B cell (primary cell): ENCODE measurements at regions of chr9 and their contacts with region 1.

Region 1: DNA sequence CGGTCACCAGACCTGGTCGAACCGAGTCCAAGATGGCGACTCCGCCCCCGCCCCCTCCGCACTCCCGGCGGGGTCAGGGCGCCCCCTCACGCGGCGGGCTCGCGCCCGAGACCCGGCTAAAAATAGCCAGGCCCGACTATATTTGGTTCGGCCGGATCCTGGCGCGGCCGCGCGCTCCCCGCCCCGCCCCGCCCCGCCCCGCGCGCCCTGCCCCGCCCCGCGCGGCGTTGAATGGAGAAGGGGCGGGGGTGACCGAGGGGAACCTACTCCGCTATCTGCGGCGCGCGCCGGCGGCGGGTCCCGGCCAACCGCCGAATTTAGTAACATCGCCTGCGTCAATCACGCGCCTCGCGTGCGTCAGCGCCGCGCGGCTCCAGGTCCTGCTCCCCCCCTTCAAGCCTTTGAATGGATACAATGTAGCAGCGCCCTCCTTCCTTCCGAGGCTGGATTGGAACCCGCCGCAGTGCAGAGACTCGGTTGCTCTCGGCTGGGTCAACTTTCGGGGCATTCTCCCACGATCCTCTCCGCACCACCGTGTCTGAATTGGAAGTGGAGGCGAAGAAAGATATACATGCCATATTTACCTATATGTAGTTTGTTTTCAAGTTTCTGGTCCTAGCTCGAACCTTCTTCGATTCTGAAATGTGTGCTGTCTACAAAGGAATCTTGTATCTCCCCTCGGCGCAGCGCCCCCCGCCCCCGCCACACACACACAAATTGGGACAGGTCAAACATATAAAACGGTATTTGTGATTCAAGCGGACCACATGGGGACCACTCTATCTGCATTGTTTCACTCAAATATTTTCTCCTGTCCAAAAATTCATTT is 1.6 kb upstream of the NR4A3 start:
- DNase-seq: peak; percentile 98
- ATAC-seq: peak; percentile 54
- H3K4me3 ChIP-seq: peak overlapping the region; percentile 73 to 100 (median 80)
- H3K4me3 Mint-ChIP-seq: peak overlapping the region; percentile 100
- H3K27ac ChIP-seq: peak overlapping the region; percentile 94 to 98
- H3K27ac Mint-ChIP-seq: peak overlapping the region; percentile 98
- H3K4me1 ChIP-seq: peaks cover 41 to 49% of the 10 kb centered on the region in 2 donors
- H3K4me1 Mint-ChIP-seq: peaks cover 47% of the 10 kb centered on the region
- H3K27me3 ChIP-seq: peaks cover 0 to 33% (median 18%) of the 10 kb centered on the region in 4 experiments
- H3K27me3 Mint-ChIP-seq: peaks cover 10% of the 10 kb centered on the region
- CTCF ChIP-seq: no peak

Region 2: DNA sequence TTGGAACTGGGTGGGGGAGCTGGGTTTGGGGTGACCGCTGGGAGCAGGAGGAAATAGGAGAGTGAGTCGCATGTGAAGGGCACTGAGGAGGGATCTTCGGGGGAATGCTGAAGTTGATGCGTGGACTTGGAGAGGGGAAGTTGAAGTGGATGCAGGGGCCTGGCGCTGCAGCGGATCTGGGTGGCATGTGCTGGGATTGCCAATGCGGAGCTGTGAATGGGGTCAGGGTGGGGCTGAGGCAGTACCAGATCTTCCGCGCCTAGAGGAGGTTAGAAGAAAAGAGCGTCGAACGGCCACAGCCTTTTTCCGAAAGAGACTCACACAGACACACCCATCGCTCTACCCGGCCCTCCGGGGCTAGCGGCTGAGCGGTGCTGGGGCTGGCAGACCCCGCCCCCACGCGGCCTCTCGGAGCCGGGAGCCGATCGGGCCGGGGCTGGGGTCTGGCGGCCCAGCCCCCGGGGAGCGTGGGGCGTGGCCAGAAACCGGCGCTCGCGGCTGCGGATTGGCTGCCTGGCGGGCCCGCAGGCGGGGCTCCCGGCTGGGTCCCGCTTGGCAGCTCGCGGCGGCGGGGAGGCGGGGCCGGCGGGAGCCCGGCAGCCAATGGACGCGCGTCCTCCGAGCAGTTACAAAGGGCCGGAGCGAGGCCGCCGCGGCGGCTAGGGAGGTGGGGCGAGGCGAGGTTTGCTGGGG is 715.5 kb before region 1 on chr9 and contains the start of gene TGFBR1:
- CTCF ChIA-PET with region 1: interaction called, 4 read pairs
- POLR2A ChIA-PET with region 1: no interaction called
- intact Hi-C with region 1: loop called (anchors 2 kb)
- DNase-seq: peak; percentile 96
- ATAC-seq: peak; percentile 83
- H3K4me3 ChIP-seq: peak within 1 kb of the TSS; percentile 64 to 87 (median 79)
- H3K4me3 Mint-ChIP-seq: peak within 1 kb of the TSS; percentile 97
- H3K27ac ChIP-seq: peak within 1 kb of the TSS; percentile 16 to 74
- H3K27ac Mint-ChIP-seq: peak within 1 kb of the TSS; percentile 89
- H3K4me1 ChIP-seq: peaks cover 40 to 44% of the 10 kb centered on the region in 2 donors
- H3K4me1 Mint-ChIP-seq: peaks cover 48% of the 10 kb centered on the region
- H3K27me3 ChIP-seq: no peaks in the 10 kb centered on the region
- H3K27me3 Mint-ChIP-seq: no peaks in the 10 kb centered on the region
- CTCF ChIP-seq: no peak
- total RNA-seq, gene TGFBR1: 60.7 TPM in 2 replicates

Region 3: GRCh38 chr9:99231711-99232110 is 588.4 kb before region 1 on chr9:
- CTCF ChIA-PET with region 1: interaction called, 17 read pairs
- POLR2A ChIA-PET with region 1: interaction called, 5 read pairs
- intact Hi-C with region 1: loop called (anchors 1 kb)
- DNase-seq: peak; percentile 52
- ATAC-seq: no peak
- H3K4me3 ChIP-seq: no peak overlapping the region
- H3K4me3 Mint-ChIP-seq: no peak overlapping the region
- H3K27ac ChIP-seq: no peak overlapping the region
- H3K27ac Mint-ChIP-seq: no peak overlapping the region
- H3K4me1 ChIP-seq: peaks cover 21 to 23% of the 10 kb centered on the region in 2 donors
- H3K4me1 Mint-ChIP-seq: peaks cover 29% of the 10 kb centered on the region
- H3K27me3 ChIP-seq: no peaks in the 10 kb centered on the region
- H3K27me3 Mint-ChIP-seq: no peaks in the 10 kb centered on the region
- CTCF ChIP-seq: peak; percentile 75

Region 4: DNA sequence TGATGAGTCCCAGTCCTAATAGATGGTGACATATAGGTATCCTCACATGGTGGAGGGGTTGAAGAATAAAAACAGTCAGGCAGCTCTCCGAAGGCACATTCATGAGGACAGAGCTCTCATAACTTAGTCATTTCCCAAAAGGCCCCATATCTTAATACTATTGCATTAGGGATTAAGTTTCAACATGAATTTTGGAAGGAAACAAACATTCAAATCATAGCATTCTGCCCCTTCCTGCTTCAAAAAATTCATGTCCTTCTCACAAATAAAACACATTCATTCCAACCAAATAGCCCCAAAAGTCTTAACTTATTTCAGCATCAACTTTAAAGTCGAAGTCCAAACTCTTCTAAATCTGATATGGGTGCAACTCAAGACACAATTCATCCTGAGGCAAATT is 275.5 kb before region 1 on chr9:
- CTCF ChIA-PET with region 1: no interaction called
- POLR2A ChIA-PET with region 1: no interaction called
- intact Hi-C with region 1: no loop called
- DNase-seq: no peak
- ATAC-seq: no peak
- H3K4me3 ChIP-seq: no peak overlapping the region
- H3K4me3 Mint-ChIP-seq: no peak overlapping the region
- H3K27ac ChIP-seq: no peak overlapping the region
- H3K27ac Mint-ChIP-seq: no peak overlapping the region
- H3K4me1 ChIP-seq: no peaks in the 10 kb centered on the region
- H3K4me1 Mint-ChIP-seq: no peaks in the 10 kb centered on the region
- H3K27me3 ChIP-seq: no peaks in the 10 kb centered on the region
- H3K27me3 Mint-ChIP-seq: peaks cover 7% of the 10 kb centered on the region
- CTCF ChIP-seq: no peak

Region 5: DNA sequence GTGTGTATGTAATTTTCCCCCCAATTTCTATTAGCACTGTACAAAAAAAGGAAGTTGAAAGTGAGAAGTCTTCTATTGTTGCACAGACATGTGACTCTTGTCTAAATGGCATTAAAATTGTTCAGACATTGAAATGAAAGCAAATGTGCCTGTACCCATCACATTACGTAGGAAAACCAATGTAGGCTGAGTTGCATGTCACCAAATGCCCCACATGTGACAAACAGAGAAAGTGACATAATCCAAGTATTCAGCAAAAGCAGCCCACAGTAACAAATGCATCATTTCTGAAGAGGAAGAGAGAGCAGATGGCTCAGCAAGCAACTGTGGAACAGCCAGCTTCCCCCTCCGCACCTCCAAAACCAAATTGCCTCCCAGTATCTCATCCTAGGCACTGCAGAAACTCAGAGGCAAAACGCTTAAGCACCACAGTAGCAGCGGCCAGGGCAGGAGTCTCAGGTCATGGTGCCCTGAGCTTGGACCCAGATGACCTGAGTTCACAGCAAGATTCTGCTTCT is 159.8 kb before region 1 on chr9:
- CTCF ChIA-PET with region 1: no interaction called
- POLR2A ChIA-PET with region 1: no interaction called
- intact Hi-C with region 1: loop called (anchors 1 kb)
- DNase-seq: peak; percentile 90
- ATAC-seq: peak; percentile 93
- H3K4me3 ChIP-seq: peak overlapping the region in 3 of 5 experiments; percentile 12 to 40 (median 22)
- H3K4me3 Mint-ChIP-seq: peak overlapping the region; percentile 55
- H3K27ac ChIP-seq: peak overlapping the region; percentile 59 to 80
- H3K27ac Mint-ChIP-seq: peak overlapping the region; percentile 92
- H3K4me1 ChIP-seq: peaks cover 14 to 16% of the 10 kb centered on the region in 2 donors
- H3K4me1 Mint-ChIP-seq: peaks cover 22% of the 10 kb centered on the region
- H3K27me3 ChIP-seq: no peaks in the 10 kb centered on the region
- H3K27me3 Mint-ChIP-seq: no peaks in the 10 kb centered on the region
- CTCF ChIP-seq: no peak

Region 6: GRCh38 chr9:99948896-99949295 is 128.8 kb after region 1 on chr9:
- CTCF ChIA-PET with region 1: no interaction called
- POLR2A ChIA-PET with region 1: no interaction called
- intact Hi-C with region 1: no loop called
- DNase-seq: no peak
- ATAC-seq: no peak
- H3K4me3 ChIP-seq: no peak overlapping the region
- H3K4me3 Mint-ChIP-seq: no peak overlapping the region
- H3K27ac ChIP-seq: no peak overlapping the region
- H3K27ac Mint-ChIP-seq: no peak overlapping the region
- H3K4me1 ChIP-seq: no peaks in the 10 kb centered on the region
- H3K4me1 Mint-ChIP-seq: peaks cover 1% of the 10 kb centered on the region
- H3K27me3 ChIP-seq: no peaks in the 10 kb centered on the region
- H3K27me3 Mint-ChIP-seq: no peaks in the 10 kb centered on the region
- CTCF ChIP-seq: no peak

Region 7: GRCh38 chr9:100028201-100028784 is 208.2 kb after region 1 on chr9:
- CTCF ChIA-PET with region 1: no interaction called
- POLR2A ChIA-PET with region 1: no interaction called
- intact Hi-C with region 1: loop called (anchors 5 kb)
- DNase-seq: peak; percentile 83
- ATAC-seq: peak; percentile 99
- H3K4me3 ChIP-seq: no peak overlapping the region
- H3K4me3 Mint-ChIP-seq: no peak overlapping the region
- H3K27ac ChIP-seq: no peak overlapping the region
- H3K27ac Mint-ChIP-seq: peak overlapping the region; percentile 3
- H3K4me1 ChIP-seq: peaks cover 16% of the 10 kb centered on the region in 2 donors
- H3K4me1 Mint-ChIP-seq: peaks cover 26% of the 10 kb centered on the region
- H3K27me3 ChIP-seq: no peaks in the 10 kb centered on the region
- H3K27me3 Mint-ChIP-seq: no peaks in the 10 kb centered on the region
- CTCF ChIP-seq: peak; percentile 99

Region 8: DNA sequence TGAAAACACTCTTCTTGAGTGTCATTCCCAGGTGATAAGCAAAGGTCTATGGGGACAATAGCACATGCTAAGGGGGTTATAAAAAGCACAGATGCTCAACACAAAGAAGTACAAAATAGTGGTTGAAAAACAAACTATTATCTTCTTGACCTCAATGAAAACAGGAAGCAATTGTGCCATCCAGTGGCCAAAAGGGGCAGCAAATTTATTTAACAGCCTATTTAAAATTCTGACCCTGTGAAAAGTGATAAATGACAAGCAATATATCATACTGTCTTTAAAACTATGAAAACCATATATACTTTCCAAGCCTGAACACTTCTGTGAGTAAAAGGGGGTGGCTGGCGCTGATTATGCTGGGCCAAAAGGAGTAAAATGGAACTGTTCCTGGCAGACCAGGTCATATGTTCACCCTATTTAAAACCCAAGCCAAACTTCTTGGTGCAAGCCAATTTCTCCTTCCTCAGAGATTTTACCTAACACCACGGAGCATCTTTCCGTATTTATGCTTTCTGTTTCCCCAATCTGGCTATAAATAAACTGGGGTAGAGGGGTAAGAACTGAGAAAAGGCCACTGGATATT is 503.0 kb after region 1 on chr9:
- CTCF ChIA-PET with region 1: interaction called, 3 read pairs
- POLR2A ChIA-PET with region 1: no interaction called
- intact Hi-C with region 1: loop called (anchors 10 kb)
- DNase-seq: peak; percentile 61
- ATAC-seq: no peak
- H3K4me3 ChIP-seq: no peak overlapping the region
- H3K4me3 Mint-ChIP-seq: no peak overlapping the region
- H3K27ac ChIP-seq: no peak overlapping the region
- H3K27ac Mint-ChIP-seq: no peak overlapping the region
- H3K4me1 ChIP-seq: no peaks in the 10 kb centered on the region
- H3K4me1 Mint-ChIP-seq: peaks cover 4% of the 10 kb centered on the region
- H3K27me3 ChIP-seq: no peaks in the 10 kb centered on the region
- H3K27me3 Mint-ChIP-seq: no peaks in the 10 kb centered on the region
- CTCF ChIP-seq: peak; percentile 78